Activated naive CD8-positive, alpha-beta T cell treated with anti-CD3 and anti-CD28 coated beads, Interleukin-2, amount 10 ng/mL, durations not matched to agents 7 days and 5 days (primary cell): ENCODE measurements at regions of chr1 and their contacts with region 1.

Region 1: GRCh38 chr1:9244501-9245229 is 10.1 kb downstream of the H6PD start:
- DNase-seq: no peak
- ATAC-seq: peak; percentile 28
- H3K4me3 Mint-ChIP-seq: peak overlapping the region; percentile 76
- H3K27ac Mint-ChIP-seq: peak overlapping the region; percentile 70
- H3K4me1 Mint-ChIP-seq: peaks cover 29% of the 10 kb centered on the region
- H3K27me3 Mint-ChIP-seq: no peaks in the 10 kb centered on the region

Region 2: DNA sequence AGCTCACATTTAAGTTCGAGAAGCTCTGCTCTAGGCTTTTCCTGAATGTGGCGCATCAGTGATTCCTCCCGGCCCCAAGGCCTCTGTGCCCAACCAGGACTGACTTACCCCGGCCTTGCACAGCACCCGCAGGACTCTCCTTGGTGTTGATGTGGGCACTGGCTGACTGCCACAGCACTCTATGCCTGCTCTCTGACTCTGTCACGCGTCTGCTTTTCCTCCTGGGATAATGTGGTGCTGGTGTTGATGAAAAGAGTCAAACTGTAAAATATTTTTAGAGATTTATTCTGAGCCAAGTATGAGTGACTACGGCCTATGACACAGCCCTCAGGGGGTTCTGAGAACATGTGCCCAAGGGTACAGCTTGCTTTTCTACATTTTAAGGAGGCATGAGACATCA is 159.8 kb before region 1 on chr1:
- POLR2A ChIA-PET with region 1: no interaction called
- DNase-seq: no peak
- ATAC-seq: no peak
- H3K4me3 Mint-ChIP-seq: no peak overlapping the region
- H3K27ac Mint-ChIP-seq: no peak overlapping the region
- H3K4me1 Mint-ChIP-seq: peaks cover 17% of the 10 kb centered on the region
- H3K27me3 Mint-ChIP-seq: peaks cover 45% of the 10 kb centered on the region

Region 3: DNA sequence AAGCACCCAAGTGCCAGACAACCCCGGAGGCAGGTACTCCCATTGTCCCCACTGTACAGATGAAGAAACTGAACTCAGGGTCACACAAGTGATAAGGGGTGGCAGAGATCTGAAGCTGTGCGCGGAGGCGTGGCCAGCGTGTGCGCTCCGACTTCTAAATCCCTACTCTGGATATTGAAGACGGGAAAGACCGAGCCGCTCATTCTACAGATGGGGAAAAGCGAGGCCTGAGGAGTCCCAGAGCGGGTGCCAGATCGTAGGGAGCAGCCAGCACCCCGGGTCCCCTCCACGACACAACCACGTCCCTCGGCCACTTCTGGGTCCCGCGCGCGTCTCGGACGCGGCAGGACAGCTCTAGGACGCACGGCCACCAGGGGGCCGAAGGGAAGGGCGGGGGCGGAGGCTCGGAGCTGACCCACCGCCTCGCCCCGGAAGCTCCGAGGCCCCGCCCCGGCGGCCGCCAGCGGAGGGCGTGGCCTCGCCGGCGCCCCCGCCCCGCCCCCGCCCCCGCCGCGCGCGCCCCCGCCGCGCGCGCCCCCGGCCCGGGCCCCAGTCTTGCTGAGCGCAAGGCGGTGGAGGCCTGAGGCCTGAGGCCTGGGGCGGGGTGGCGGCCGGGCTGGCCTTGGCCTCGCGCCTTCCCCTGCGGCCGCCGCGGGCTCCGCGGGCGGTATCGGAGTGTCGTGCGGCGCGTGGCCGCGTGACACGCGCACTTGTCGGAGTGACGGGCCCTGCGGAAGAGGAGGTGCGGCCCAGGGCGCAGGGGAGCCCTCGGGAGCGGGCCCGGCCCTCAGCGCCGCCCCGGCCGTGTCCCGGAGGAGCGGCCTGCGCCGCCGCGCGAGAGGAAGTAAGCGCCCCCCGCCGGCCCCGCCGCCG is 10.2 kb before region 1 on chr1 and contains the start of gene H6PD:
- POLR2A ChIA-PET with region 1: interaction called, 11 read pairs
- DNase-seq: peak; percentile 87
- ATAC-seq: peak; percentile 84
- H3K4me3 Mint-ChIP-seq: peak within 1 kb of the TSS; percentile 91
- H3K27ac Mint-ChIP-seq: peak within 1 kb of the TSS; percentile 90
- H3K4me1 Mint-ChIP-seq: peaks cover 30% of the 10 kb centered on the region
- H3K27me3 Mint-ChIP-seq: peaks cover 2% of the 10 kb centered on the region
- total RNA-seq, gene H6PD: 15.3 to 15.9 TPM

Region 4: DNA sequence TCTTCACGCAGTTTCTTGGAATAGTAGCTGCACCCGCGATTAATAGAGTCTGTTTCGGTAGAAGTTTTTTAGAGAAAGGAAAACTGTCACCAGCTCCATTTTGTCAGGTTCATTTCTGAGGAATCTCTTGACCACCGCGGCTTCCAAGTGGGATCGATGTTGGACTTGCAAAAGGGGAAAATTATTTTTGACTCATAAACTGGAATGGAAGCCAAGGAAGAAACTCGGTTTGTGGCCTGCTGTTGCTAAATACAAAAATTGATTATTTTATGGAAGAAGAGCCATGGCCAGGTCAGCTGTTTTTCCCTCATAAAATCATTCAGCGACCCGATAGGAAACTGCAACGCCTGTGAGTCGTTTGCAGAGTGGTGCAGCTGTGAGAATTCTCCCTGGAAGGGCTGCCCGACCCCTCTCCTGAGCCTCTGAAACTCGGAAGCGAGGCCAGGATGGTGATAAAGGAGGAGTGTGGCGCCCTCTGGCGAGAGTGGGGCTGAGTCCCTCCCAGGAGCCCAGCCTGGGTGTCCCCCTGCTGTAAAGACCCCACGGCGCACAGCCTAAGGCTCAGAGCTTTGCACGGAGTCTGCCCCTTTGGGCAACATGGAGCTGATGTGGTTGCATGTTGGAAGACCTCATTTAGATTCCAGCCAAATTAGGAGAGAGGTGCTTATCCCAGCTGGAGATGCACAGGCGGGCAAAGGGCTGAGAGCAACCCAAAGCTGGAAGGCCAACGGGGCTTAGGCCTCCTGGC is 211.0 kb after region 1 on chr1:
- POLR2A ChIA-PET with region 1: no interaction called
- DNase-seq: peak; percentile 71
- ATAC-seq: peak; percentile 45
- H3K4me3 Mint-ChIP-seq: no peak overlapping the region
- H3K27ac Mint-ChIP-seq: no peak overlapping the region
- H3K4me1 Mint-ChIP-seq: no peaks in the 10 kb centered on the region
- H3K27me3 Mint-ChIP-seq: peaks cover 19% of the 10 kb centered on the region